MCF 10A (cell line): ENCODE measurements at regions of chr3 and their contacts with region 1.

Region 1: GRCh38 chr3:172622916-172623700 is 87.8 kb downstream of the NCEH1 start:
- DNase-seq: peak; percentile 73
- H3K4me3 Mint-ChIP-seq: no peak overlapping the region
- H3K27ac Mint-ChIP-seq: no peak overlapping the region
- H3K4me1 Mint-ChIP-seq: peaks cover 34% of the 10 kb centered on the region
- H3K27me3 Mint-ChIP-seq: no peaks in the 10 kb centered on the region
- CTCF ChIP-seq: peak; percentile 48

Region 2: GRCh38 chr3:172607305-172608121 is 15.6 kb before region 1 on chr3:
- CTCF ChIA-PET with region 1: interaction called, 17 read pairs
- POLR2A ChIA-PET with region 1: interaction called, 5 read pairs
- intact Hi-C with region 1: no loop called
- DNase-seq: peak; percentile 92
- H3K4me3 Mint-ChIP-seq: no peak overlapping the region
- H3K27ac Mint-ChIP-seq: peak overlapping the region; percentile 39
- H3K4me1 Mint-ChIP-seq: peaks cover 18% of the 10 kb centered on the region
- H3K27me3 Mint-ChIP-seq: no peaks in the 10 kb centered on the region
- CTCF ChIP-seq: no peak

Region 3: DNA sequence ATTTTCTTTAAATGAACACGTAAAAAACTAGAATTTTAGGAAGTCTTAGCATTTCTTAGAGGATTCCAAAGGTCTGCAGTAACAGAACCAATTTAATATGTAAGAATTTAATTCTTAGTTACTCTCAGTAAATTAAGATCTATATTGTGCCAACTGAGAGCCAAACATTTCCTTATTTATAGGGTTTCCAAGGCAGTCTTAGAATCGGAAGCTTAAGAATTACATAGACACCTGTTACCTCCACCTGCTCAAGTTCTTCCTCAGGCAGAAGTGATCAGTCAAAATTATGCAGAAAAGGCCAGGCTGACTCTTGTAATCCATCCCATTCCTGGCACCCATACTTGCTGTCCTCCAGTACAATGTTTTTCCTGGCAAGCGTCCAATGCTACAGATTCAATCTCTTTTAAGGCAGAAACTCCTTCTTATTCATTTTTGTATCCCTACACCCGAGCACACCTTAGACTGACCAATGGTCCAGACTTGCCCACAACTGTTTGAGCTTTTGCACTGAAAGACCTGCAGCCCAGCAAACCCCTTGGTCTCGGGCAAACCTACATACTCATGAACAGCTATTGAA is 23.4 kb after region 1 on chr3:
- CTCF ChIA-PET with region 1: interaction called, 10 read pairs
- POLR2A ChIA-PET with region 1: interaction called, 7 read pairs
- intact Hi-C with region 1: no loop called
- DNase-seq: peak; percentile 96
- H3K4me3 Mint-ChIP-seq: no peak overlapping the region
- H3K27ac Mint-ChIP-seq: no peak overlapping the region
- H3K4me1 Mint-ChIP-seq: peaks cover 8% of the 10 kb centered on the region
- H3K27me3 Mint-ChIP-seq: no peaks in the 10 kb centered on the region
- CTCF ChIP-seq: no peak